Activated T-helper 2 cell treated with anti-CD3 and anti-CD28 coated beads, Interferon-gamma antibody, Interleukin-2, Interleukin-4, amounts not matched to agents 10 μg/mL and 5 μg/mL and 100 μg/mL, durations not matched to agents 14 hours and 24 hours and 36 hours (primary cell): ENCODE measurements at regions of chr4 and their contacts with region 1.

Region 1: GRCh38 chr4:77031544-77031943 is 44.2 kb downstream of the CCNI start:
- DNase-seq: no peak
- H3K4me3 Mint-ChIP-seq: no peak overlapping the region
- H3K27ac Mint-ChIP-seq: no peak overlapping the region
- H3K4me1 Mint-ChIP-seq: peaks cover 40% of the 10 kb centered on the region
- H3K27me3 Mint-ChIP-seq: peaks cover 47% of the 10 kb centered on the region

Region 2: DNA sequence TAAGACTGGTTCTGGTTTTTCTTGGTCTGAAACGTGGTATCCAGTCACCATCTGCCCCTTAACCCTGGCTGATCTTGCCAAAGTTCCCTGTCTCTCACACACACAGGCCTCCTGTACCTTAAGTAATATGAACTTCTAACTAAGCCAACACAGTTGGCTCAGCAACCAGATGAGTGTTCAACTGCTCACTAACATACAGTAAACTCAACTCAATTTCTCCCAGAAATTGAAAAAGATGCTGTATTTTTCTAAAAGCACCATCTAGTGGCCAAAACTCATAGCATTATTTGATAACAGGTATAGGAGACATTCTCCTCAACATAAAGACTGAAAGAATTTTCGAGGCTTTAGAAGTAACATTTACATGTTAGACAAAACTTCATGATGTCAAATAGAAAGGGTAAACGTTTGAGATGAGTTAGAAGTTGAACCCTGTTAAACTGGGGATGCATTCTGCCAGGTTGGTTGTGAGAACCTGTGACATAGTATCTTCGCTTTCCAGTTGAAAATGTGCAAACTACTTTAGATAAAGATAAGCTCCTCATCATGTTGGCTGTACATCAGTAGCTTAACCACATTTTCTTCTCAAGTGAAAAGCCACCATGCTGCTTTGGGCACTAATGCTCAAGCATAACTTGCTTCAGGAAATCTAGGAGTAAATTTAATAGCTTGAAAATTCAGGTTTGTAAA is 13.1 kb after region 1 on chr4:
- intact Hi-C with region 1: loop called (anchors 2 kb)
- DNase-seq: no peak
- H3K4me3 Mint-ChIP-seq: no peak overlapping the region
- H3K27ac Mint-ChIP-seq: peak overlapping the region; percentile 3
- H3K4me1 Mint-ChIP-seq: peaks cover 6% of the 10 kb centered on the region
- H3K27me3 Mint-ChIP-seq: peaks cover 5% of the 10 kb centered on the region

Region 3: GRCh38 chr4:77193511-77194102 is 162.1 kb after region 1 on chr4:
- intact Hi-C with region 1: loop called (anchors 2 kb)
- DNase-seq: peak; percentile 77
- H3K4me3 Mint-ChIP-seq: peak overlapping the region; percentile 81
- H3K27ac Mint-ChIP-seq: peak overlapping the region; percentile 97
- H3K4me1 Mint-ChIP-seq: peaks cover 47% of the 10 kb centered on the region
- H3K27me3 Mint-ChIP-seq: peaks cover 3% of the 10 kb centered on the region

Region 4: DNA sequence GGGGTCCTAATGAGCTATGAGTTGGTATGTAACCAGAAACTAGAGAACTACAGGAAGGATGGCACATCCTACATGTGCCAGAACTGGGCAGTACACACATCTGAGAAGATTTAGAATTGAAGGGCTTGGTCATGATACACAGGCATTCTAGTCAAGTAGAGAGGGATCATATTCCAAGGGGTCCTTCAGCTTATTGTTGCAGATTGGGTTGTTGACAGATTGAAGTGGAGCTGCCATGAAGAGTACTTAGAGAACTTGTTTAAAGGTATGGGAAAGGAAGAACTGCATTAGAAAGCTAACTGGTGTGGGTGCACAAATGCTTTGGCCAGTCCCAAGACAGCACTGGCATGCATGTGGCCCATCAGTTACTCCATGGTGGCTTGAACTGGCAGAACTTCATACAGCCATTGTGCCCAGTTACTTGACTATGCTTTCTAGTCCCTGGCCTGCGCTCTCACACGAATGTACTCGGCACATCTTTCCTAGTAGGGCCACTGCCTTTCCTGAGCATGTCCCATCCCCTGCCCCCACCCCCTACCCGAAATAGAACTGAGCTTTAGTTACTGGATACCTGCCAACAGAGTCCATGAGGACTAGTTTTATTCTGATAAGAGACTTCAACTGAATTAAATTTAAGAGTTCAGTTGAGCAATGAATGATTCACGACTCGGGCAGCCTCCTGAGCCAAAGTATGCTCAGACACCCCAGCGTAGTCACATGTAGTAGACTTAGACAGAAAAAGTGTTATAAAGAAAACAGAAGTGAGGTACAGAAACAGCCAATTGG is 189.5 kb after region 1 on chr4:
- intact Hi-C with region 1: no loop called
- DNase-seq: no peak
- H3K4me3 Mint-ChIP-seq: no peak overlapping the region
- H3K27ac Mint-ChIP-seq: no peak overlapping the region
- H3K4me1 Mint-ChIP-seq: no peaks in the 10 kb centered on the region
- H3K27me3 Mint-ChIP-seq: peaks cover 27% of the 10 kb centered on the region

Region 5: DNA sequence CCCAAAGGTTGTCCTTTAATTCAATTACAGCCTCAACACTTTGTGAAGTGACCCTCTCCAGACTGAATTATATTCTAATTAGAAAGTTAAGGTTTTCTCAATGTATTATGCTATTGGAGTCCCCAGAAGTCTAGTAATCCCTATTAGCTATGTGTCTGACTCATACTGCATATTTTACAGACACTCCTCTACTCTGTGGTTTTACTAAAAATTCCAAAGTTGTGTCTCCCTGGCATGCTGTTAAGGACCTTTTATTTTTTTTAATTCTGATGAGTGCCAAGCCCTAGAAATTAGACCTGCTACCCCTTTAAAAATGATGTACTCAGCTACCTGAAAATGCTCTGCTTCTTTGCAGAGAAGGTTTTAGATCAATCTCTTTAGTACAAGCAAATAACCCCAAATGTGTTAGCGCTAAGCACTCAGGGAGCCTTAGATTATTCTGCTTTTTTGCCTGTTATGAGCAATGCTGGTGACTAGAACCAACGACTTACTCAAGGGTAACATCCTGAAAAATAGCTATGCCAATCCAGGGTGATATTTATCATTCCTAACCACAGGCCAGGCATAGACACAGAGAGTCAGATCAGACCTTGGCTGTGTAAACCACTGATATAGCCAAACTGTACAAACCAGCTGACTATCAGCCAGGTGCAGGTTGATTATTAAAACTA is 548.0 kb after region 1 on chr4:
- intact Hi-C with region 1: loop called (anchors 1 kb)
- DNase-seq: no peak
- H3K4me3 Mint-ChIP-seq: no peak overlapping the region
- H3K27ac Mint-ChIP-seq: peak overlapping the region; percentile 47
- H3K4me1 Mint-ChIP-seq: peaks cover 42% of the 10 kb centered on the region
- H3K27me3 Mint-ChIP-seq: no peaks in the 10 kb centered on the region